ENCODE measurements at regions of chr20 and their contacts with region 1.

Region 1: DNA sequence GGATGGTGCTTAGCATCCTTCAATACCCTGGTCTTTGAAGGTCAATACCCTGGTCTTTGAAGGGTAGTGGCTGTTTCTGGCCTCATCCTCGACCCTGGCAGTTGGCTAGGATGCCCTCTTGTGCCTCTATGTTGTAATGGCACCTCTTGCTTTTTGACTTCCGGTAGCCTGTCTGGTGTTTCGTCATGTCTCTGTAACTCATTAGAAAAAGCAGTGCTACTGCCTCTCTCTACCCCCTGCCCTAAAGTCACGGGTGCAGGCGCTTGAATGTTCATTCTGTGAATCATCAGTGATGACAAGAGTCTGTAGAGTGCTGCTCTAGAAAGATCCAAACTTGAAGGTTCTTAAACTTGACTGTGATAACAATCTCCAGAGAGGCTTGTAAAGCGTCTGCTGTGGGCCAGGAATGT is 28.3 kb downstream of the RSPO4 start:
- DNase-seq: no peak
- ATAC-seq: no peak

Region 2: DNA sequence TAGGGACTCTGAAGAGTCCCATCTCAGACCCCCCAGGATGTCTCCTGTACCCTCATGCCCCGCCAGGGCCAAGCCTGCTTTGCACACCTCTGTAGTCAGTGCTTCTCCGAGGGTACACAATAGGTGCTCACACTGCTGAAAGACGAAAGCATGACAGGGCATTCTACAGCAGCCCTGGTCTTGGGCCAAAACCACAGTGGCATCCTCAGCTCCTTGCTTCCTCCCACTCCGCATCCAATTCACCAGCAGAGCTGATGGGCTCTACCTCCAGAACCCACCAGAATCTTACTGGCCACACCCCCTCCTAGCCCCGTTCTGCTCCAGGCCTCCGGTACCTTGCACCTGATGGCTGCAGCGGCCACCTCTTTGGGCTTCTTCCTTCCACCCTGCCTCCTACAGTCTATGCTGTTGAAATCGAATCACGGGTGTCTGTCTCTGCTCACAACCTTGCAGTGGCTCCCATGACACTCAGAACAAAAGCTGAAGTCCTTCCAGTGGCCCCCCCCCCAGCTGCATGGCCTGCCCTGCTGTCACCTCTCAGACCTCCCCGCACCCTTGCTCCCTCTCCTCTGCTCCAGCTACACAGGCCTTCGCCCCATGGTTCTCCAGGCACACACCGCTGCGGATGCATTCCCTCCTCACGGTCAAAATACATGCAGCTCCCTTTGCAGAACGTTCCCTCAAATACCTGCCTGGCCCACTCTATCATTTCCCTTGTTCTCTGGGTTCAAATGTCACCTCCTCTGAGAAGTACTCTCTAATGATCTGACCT is 58.9 kb before region 1 on chr20:
- intact Hi-C with region 1: loop called (anchors 1 kb)
- DNase-seq: no peak
- ATAC-seq: no peak

Region 3: GRCh38 chr20:1185790-1186334 is 212.1 kb after region 1 on chr20:
- intact Hi-C with region 1: loop called (anchors 10 kb)
- DNase-seq: no peak
- ATAC-seq: peak; percentile 32